Right lobe of liver (tissue), 6 donors: ENCODE measurements at regions of chr5 and their contacts with region 1.

Region 1: DNA sequence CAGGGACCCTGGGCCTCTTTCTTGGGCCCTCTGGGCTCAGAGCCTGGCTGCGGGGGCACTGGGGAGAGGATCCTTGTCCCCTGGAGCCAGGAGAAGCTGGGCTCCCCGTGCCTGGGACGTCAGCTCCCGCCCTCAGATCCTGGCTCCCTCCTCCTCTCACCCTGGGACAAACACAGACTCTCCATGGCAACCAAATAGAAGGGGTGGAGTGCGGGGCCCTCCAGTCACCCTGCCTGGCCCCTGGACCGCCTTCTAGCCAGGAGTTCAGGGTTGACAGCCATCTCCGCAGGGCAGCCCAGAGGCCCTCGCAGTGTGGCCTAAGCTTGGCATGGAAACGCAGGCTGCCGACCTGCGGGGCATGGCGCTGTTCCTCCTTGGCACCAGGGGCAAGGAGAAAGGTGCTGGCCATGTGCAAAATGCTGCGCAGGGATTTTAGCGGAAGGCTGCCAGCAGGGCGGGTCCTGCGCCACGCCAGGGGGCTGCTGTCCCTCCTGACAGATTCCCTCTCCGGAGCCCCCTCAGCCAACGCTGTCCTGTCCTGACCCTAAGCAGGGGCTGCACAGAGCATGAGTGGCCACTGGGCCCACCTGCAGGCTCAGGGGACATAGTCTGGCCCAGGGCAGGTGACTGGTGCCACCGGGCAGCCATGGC is 1.0 kb downstream of the ZDHHC11 start:
- DNase-seq: peak; percentile 11 to 46 (median 33)
- ATAC-seq: peak; percentile 15 to 58 (median 32)
- H3K4me3 ChIP-seq: peak overlapping the region in 2 of 3 donors; percentile 9 to 21
- H3K27ac ChIP-seq: no peak overlapping the region
- H3K4me1 ChIP-seq: no peaks in the 10 kb centered on the region
- H3K27me3 ChIP-seq: no peaks in the 10 kb centered on the region
- CTCF ChIP-seq: no peak
- POLR2A ChIP-seq: no peak

Region 2: DNA sequence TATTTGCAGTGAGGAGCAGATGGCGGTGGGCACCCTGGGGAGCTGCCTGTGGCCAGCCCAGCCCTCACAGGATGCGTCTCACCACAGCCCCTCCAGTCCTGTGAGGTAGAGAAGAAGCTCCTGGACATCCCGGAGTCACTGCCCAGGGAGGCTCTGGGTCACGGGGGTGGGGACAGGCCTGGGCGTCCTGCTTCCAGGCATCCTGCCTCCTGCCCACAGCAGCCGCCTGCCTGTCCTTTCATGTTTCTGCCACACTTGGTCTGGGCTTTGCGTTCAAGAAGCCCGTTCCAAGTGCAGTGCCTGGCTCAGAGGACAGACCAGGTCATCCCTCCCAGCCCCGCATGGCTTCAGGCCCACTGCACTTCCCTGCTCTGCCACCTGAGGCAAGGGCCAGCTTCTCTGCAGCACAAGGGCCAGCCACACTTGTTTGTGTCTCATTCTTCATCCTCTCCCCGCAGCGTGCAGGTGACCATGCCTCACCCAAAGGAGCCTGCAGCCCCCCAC is 103.5 kb before region 1 on chr5:
- intact Hi-C with region 1: loop called in 1 of 2 experiments (anchors 5 kb)
- DNase-seq: peak in 1 of 3 donors; percentile 32
- ATAC-seq: no peak
- H3K4me3 ChIP-seq: no peak overlapping the region
- H3K27ac ChIP-seq: no peak overlapping the region
- H3K4me1 ChIP-seq: no peaks in the 10 kb centered on the region
- H3K27me3 ChIP-seq: no peaks in the 10 kb centered on the region
- CTCF ChIP-seq: no peak
- POLR2A ChIP-seq: no peak

Region 3: DNA sequence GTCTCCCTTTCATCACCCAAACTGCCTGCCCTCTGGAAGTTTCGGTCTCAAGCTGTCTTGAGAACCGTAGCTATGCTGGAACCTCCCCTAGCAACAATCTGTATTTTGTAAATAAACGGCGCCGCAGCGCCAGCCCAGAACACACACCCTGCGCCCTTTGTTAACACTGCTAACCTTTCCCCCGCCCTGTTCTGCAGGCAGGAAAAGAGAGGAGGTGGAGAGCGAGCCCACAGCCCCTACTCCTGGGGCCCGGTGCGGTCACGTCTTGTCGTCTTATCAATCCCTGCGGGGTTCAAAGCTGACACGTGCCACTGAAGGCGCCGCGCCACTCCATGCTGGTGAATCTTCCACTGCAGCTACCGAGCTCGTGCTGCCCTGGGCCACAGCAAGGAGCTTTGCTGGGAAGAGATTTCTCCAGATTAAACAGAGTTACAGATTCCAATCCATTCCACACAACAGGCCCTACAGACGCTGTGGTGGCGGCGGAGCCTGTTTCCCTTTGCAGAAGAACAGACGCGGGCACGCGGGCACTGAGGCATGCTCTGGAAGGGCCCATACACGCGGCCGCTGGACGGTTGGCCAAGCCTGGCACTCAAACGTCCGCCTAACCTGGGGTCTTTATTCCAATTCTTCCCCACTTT is 90.5 kb before region 1 on chr5:
- intact Hi-C with region 1: loop called in 1 of 2 experiments (anchors 5 kb)
- DNase-seq: peak in 2 of 3 donors; percentile 56 to 74
- ATAC-seq: peak; percentile 76 to 81 (median 80)
- H3K4me3 ChIP-seq: peak overlapping the region in 1 of 3 donors; percentile 19
- H3K27ac ChIP-seq: peak overlapping the region in 1 of 3 donors; percentile 80
- H3K4me1 ChIP-seq: peaks cover 0 to 12% (median 6%) of the 10 kb centered on the region in 4 donors
- H3K27me3 ChIP-seq: no peaks in the 10 kb centered on the region
- CTCF ChIP-seq: no peak
- POLR2A ChIP-seq: no peak

Region 4: DNA sequence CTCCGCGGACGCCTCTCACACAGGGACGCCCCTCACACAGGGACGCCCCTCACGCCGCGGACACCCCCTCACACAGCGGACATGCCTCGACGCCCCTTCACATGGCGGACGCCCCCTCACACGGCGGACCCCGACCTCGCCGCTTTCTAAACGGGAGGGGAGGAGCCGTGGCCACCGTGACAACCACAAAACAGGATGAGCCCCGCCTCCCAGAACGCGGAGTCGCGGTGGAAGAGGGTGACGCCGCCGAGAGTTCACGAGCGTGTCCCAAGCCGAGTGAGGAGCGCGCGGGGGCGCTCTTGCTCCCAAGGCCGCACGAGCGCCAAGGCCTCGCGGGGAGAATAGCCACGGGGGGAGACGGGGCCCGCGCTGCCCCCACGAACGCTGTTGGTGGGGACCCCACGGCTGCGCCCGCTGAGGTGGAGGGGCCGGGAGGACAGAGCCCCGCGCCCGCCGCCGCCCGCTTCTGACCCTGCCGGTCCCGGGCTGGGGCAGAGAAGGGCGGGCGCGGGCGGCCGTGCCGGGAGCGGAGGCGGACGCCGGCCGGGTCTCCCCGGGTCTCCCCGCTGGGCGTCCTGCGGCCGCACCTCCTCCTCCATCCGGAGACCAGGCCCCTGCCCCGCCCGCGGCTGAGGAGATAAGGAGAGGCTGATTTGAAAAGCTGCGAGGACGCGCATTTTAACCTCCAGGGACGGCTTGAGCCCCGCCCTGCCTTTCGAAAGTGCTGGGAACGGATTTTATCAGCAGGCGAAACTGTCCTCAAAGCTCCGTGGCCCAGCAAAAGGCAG is 154.9 kb after region 1 on chr5:
- intact Hi-C with region 1: no loop called
- DNase-seq: peak; percentile 80 to 81 (median 81)
- ATAC-seq: peak; percentile 71 to 88 (median 87)
- H3K4me3 ChIP-seq: peak overlapping the region; percentile 37 to 57 (median 41)
- H3K27ac ChIP-seq: peak overlapping the region in 1 of 3 donors; percentile 40
- H3K4me1 ChIP-seq: peaks cover 0 to 14% (median 0%) of the 10 kb centered on the region in 4 donors
- H3K27me3 ChIP-seq: peaks cover 0 to 2% of the 10 kb centered on the region in 2 donors
- CTCF ChIP-seq: peak; percentile 25 to 56 (median 46)
- POLR2A ChIP-seq: peak; percentile 53

Region 5: DNA sequence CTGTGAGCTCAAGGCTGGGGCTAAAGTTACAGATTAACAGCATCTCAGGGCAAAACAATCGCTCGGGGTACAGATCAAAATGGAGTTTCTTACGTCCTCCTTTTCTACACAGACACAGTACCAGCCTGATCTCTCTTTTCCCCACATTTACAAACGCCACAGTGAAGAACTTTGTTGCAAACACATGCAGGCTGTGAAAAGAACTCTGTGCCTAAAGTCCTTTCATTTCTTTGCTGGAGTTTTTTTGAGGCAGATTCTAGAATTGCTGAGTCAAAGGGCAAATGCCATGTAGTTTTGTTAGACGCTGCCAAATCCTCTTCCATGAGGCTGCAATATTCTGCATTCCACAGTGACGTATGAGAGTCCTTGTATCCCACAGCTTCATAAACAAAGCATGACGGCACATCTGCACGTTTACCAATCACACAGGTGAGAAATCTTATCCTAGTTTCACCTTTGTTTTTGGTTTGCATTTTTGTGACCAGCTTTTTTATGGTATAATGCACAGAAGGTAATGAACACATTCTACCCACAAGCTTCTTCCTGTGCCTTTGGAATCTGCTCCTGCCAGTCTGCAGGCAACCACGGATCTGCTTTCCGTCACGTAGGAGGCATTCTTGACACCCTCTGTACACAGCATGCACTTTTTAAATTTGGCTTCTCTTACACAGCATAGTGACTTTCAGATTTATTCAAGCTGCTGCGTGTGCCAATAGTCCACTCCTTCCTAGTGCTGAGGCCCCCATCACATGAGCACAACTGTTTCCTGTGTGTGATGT is 718.6 kb after region 1 on chr5:
- intact Hi-C with region 1: no loop called
- DNase-seq: no peak
- ATAC-seq: peak; percentile 76 to 85 (median 83)
- H3K4me3 ChIP-seq: no peak overlapping the region
- H3K27ac ChIP-seq: peak overlapping the region; percentile 75 to 81 (median 81)
- H3K4me1 ChIP-seq: peaks cover 0 to 28% (median 7%) of the 10 kb centered on the region in 4 donors
- H3K27me3 ChIP-seq: no peaks in the 10 kb centered on the region
- CTCF ChIP-seq: no peak
- POLR2A ChIP-seq: no peak